OCI-LY7 (cell line): ENCODE measurements at regions of chr6 and their contacts with region 1.

Region 1: GRCh38 chr6:69835414-69836179 is 30.8 kb upstream of the COL19A1 start:
- DNase-seq: peak; percentile 61
- H3K4me3 ChIP-seq: no peak overlapping the region
- H3K27ac ChIP-seq: no peak overlapping the region
- H3K4me1 ChIP-seq: no peaks in the 10 kb centered on the region
- CTCF ChIP-seq: peak; percentile 92

Region 2: GRCh38 chr6:69673298-69673697 is 162.3 kb before region 1 on chr6:
- CTCF ChIA-PET with region 1: no interaction called
- POLR2A ChIA-PET with region 1: no interaction called
- intact Hi-C with region 1: no loop called
- DNase-seq: no peak
- H3K4me3 ChIP-seq: no peak overlapping the region
- H3K27ac ChIP-seq: no peak overlapping the region
- H3K4me1 ChIP-seq: no peaks in the 10 kb centered on the region
- CTCF ChIP-seq: no peak

Region 3: DNA sequence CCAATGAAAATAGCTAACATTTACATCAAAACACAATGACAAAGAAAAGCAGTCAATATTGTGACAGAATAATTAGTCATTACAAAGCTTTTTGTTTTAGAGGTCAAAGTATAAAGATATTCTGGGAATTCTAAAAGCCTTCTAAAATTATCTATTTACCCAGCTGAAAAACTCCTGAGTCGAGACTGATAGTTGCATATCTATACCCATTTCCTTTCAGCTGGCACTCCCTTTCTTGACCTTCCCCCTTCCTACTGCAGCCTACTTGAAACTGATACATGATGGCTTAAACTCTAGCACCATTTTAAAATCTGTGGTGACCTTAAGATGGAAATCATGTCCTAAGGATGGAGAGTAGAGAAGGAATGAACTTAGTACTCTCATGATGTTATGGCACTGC is 77.4 kb before region 1 on chr6:
- CTCF ChIA-PET with region 1: no interaction called
- POLR2A ChIA-PET with region 1: no interaction called
- intact Hi-C with region 1: no loop called
- DNase-seq: no peak
- H3K4me3 ChIP-seq: no peak overlapping the region
- H3K27ac ChIP-seq: no peak overlapping the region
- H3K4me1 ChIP-seq: peaks cover 5% of the 10 kb centered on the region
- CTCF ChIP-seq: no peak

Region 4: DNA sequence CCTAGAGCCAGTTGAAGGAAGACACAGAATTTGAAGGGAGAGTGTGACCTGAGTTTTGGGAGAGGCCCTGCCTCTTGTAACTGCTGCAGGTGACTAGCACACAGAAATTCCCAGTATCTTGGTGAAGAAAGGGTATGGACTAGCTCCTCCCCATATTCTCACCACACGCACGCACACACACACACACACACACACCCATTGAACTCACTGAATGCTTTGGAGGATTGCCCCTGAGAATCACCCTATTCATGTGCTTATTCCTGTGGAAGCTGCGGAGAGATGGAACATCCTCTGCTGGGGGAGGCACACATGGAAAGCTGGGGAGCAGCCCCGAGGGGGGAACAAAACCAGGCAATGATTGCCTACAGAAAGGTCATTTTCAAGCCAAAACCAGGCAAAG is 32.6 kb before region 1 on chr6:
- CTCF ChIA-PET with region 1: no interaction called
- POLR2A ChIA-PET with region 1: no interaction called
- intact Hi-C with region 1: no loop called
- DNase-seq: no peak
- H3K4me3 ChIP-seq: no peak overlapping the region
- H3K27ac ChIP-seq: no peak overlapping the region
- H3K4me1 ChIP-seq: no peaks in the 10 kb centered on the region
- CTCF ChIP-seq: no peak

Region 5: DNA sequence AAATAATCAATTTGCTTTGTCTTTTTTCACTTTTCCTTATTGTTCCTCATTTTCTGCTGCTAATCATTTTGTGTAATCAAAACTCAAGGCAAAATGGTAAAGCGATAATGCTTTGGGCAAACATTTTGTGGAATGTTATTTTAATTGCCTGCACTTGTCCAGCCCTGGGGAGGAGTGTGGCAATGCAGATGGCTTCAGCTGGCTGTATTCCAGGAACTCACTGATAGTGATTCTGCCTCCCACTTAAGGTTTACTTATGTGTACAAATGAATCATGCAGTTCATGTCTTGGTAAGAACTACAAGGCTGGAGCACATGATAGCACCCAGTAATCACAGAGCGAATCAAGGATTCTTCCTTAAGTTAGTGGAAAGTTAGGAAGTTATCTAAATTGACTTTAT is 138.6 kb after region 1 on chr6:
- CTCF ChIA-PET with region 1: no interaction called
- POLR2A ChIA-PET with region 1: no interaction called
- intact Hi-C with region 1: loop called (anchors 10 kb)
- DNase-seq: no peak
- H3K4me3 ChIP-seq: no peak overlapping the region
- H3K27ac ChIP-seq: no peak overlapping the region
- H3K4me1 ChIP-seq: no peaks in the 10 kb centered on the region
- CTCF ChIP-seq: no peak